Mammary epithelial cell (primary cell): ENCODE measurements at regions of chr1 and their contacts with region 1.

Region 1: DNA sequence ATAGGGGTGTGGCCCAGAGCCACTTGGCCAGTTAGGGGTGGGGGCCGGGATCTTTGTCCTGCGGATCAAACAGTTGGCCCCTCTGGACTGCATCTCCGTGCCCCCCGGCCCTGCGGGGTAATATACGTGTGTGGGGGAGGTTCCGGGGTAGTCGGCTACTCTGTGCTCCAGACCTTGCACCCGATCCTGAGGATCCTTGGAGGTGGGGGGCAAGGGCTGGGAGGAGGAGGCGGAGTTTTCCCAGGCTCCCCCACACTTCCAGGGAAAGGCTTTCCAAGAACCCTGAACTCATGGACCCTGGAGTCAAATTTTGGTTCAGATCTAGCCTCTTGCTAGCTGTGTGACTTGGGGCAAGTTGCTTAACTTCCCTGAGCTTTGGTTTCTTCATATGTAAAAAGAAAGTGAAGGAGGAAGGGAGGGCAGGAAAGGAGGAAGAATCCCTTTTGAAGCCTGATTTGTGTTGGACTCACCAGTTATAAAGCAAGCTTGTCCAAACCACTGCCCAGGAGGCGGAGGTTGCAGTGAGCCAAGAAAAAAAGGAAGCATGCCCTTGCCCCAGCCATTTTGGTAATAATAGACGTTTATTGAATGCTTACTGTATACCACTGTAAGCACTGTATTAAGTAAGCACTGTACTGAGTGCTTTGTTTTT is 686 bp downstream of the MIIP start:
- DNase-seq: peak; percentile 21
- H3K4me3 ChIP-seq: peak overlapping the region; percentile 74 to 92 (median 83)
- H3K27ac ChIP-seq: peak overlapping the region; percentile 69
- H3K4me1 ChIP-seq: peaks cover 2% of the 10 kb centered on the region
- H3K27me3 ChIP-seq: no peaks in the 10 kb centered on the region
- CTCF ChIP-seq: no peak

Region 2: DNA sequence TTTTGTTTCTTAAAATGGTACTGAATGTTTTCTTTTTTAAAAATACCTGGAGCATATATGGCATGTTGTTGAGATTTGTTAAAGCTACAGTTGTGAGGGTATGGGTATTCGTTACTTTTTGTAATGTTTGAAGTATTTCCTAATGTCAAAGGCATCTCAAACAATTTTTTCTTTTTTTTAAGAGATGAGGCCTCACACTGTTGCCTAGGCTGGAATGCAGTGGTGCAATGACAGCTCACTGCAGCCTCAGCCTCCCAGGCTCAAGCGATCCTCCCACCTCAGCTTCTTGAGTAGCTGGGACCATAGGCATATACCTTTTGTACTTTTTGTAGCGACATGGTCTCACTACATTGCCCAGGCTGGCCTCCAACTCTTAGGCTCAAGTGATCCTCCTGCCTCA is 197.9 kb before region 1 on chr1:
- CTCF ChIA-PET with region 1: interaction called, 18 read pairs
- dilution Hi-C with region 1: no loop called
- in situ Hi-C with region 1: no loop called
- intact Hi-C with region 1: no loop called
- DNase-seq: no peak
- H3K4me3 ChIP-seq: no peak overlapping the region
- H3K27ac ChIP-seq: no peak overlapping the region
- H3K4me1 ChIP-seq: peaks cover 9% of the 10 kb centered on the region
- H3K27me3 ChIP-seq: no peaks in the 10 kb centered on the region
- CTCF ChIP-seq: no peak

Region 3: DNA sequence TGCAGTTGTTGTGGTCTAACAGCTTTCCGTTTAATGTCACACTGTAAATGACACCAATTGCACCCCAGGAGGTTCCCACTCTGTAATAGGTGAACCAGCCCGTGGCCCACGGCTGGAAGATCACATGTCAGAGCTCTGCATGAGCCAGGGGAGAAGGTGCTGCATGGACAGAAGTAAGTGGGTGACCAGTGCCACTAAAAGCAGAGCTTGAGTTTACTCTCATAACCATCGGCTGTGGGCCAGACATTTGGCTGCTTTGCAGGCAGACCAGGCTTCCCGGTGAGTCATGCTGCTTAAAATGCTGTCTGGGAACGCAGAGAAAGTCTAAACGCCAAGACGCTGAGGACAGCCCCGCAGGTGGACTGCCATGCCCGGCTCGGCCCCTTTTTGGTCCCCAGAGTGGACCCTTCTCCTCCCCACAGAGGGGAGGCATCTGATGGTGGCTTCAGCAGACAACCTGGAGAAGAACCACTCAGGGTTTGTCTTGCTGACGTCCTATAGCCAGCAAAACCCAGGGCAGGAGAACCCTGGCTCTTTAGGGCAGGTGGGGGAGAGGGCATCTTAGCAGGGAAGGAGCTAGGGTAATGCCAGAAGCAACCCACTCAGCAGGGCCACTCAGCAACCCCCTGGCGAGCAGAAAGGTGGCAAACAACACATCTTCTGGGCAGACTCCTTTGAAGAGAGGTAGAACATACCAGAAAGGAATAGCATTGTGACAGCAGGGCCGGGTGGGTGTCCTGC is 101.0 kb before region 1 on chr1:
- CTCF ChIA-PET with region 1: no interaction called
- dilution Hi-C with region 1: loop called (anchors 10 kb)
- in situ Hi-C with region 1: no loop called
- intact Hi-C with region 1: no loop called
- DNase-seq: peak; percentile 70
- H3K4me3 ChIP-seq: no peak overlapping the region
- H3K27ac ChIP-seq: no peak overlapping the region
- H3K4me1 ChIP-seq: peaks cover 6% of the 10 kb centered on the region
- H3K27me3 ChIP-seq: no peaks in the 10 kb centered on the region
- CTCF ChIP-seq: no peak